Gastrocnemius medialis (tissue), 4 donors: ENCODE measurements at regions of chr13 and their contacts with region 1.

Region 1: GRCh38 chr13:39037880-39038568 is at the starts of genes NHLRC3 and PROSER1:
- DNase-seq: peak; percentile 78 to 88
- ATAC-seq: peak; percentile 93 to 94
- H3K4me3 ChIP-seq: peak within 1 kb of the TSS; percentile 79 to 94 (median 92)
- H3K27ac ChIP-seq: peak within 1 kb of the TSS; percentile 81 to 90 (median 88)
- H3K4me1 ChIP-seq: peaks cover 39 to 54% of the 10 kb centered on the region in 2 donors
- H3K27me3 ChIP-seq: no peaks in the 10 kb centered on the region
- CTCF ChIP-seq: peak in 3 of 5 experiments; percentile 7 to 34 (median 33)
- POLR2A ChIP-seq: peak; percentile 49 to 55
- total RNA-seq, gene NHLRC3: 7.8 to 10.5 (median 8.0) TPM
- total RNA-seq, gene PROSER1: 6.9 to 11.5 (median 9.1) TPM

Region 2: DNA sequence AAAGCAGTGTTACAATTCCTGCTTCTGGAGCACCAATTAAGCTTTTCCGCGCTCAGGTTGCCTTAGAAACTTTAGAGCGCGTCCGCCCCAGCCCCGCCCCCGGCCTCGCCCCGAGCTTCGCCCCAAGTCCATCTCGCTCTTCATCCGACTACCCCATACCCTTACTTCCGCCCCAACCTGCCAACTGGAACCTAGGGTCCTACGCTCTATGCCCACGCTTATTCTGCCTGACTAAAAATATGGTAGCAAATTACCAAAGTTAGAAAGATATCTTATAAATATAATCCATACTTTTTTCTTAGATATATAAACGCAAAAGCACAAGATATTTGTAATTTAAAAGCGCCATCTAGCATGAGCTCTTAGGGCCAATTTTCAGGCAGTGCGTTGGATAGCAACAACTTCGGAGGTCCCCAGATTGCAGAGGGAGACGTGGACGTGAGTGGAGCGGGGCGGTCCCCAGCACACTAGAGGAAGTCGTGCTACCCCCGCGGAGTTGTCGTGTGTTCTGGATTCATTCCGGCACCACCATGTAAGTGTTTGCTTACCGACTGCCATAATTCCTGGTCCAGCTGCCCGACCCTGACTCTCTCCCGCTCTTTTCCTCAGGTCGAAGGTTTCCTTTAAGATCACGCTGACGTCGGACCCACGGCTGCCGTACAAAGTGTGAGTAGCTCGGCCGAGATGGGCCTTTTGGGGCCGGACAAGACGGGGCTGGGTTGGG is 688.5 kb before region 1 on chr13 and contains the start of gene UFM1:
- in situ Hi-C with region 1: no loop called
- intact Hi-C with region 1: loop called (anchors 5 kb)
- DNase-seq: peak; percentile 81 to 85
- ATAC-seq: peak; percentile 97 to 98
- H3K4me3 ChIP-seq: peak within 1 kb of the TSS; percentile 60 to 98 (median 88)
- H3K27ac ChIP-seq: peak within 1 kb of the TSS; percentile 87 to 94 (median 90)
- H3K4me1 ChIP-seq: peaks cover 12 to 21% of the 10 kb centered on the region in 2 donors
- H3K27me3 ChIP-seq: no peaks in the 10 kb centered on the region
- CTCF ChIP-seq: no peak
- POLR2A ChIP-seq: peak; percentile 54 to 65
- total RNA-seq, gene UFM1: 22.6 to 31.0 (median 24.3) TPM

Region 3: DNA sequence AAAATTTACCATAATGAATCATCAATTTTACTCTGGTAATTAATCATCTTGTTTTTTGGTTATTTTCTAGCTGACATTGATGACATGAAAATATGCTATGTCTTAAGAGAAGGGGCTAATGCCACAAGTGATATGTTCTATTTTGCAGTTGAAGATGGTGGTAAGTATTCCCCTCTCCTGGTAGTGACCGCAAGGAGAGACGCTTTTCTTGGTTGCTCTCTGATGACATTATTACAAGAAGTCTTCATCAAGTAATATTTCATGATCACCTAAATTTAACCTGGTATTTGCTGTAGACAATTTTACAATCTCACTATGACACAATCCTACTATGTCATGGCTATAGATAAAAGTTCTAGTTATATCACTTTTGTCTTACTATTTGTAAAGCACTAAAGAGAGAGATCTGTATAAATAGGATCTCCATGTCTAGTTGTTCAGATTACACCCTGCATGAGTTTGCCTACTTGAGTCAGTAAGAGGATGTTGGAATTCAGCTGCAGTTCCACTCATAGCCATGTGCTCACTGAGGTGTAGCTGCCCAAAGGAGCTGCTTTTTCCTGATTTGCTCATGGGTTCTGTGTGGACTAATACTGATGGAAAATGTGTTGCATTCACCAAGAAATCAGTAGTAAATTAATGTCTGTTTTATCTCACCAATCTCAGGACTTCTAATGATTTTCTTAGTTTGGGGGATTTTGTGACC is 340.2 kb before region 1 on chr13:
- in situ Hi-C with region 1: no loop called
- intact Hi-C with region 1: loop called (anchors 10 kb)
- DNase-seq: peak in 1 of 2 donors; percentile 33
- ATAC-seq: peak; percentile 84 to 88
- H3K4me3 ChIP-seq: peak overlapping the region in 3 of 4 donors; percentile 16 to 20 (median 19)
- H3K27ac ChIP-seq: peak overlapping the region; percentile 74 to 79 (median 78)
- H3K4me1 ChIP-seq: peaks cover 65 to 77% of the 10 kb centered on the region in 2 donors
- H3K27me3 ChIP-seq: no peaks in the 10 kb centered on the region
- CTCF ChIP-seq: peak in 3 of 5 experiments; percentile 25 to 39 (median 29)
- POLR2A ChIP-seq: peak in 1 of 2 donors; percentile 0

Region 4: GRCh38 chr13:39602614-39603366 is 564.8 kb after region 1 on chr13 and contains the start of gene LHFPL6:
- in situ Hi-C with region 1: loop called in 1 of 4 experiments (anchors 25 kb)
- intact Hi-C with region 1: no loop called
- DNase-seq: peak; percentile 56 to 57
- ATAC-seq: peak; percentile 85 to 88
- H3K4me3 ChIP-seq: peak within 1 kb of the TSS; percentile 61 to 83 (median 73)
- H3K27ac ChIP-seq: peak within 1 kb of the TSS; percentile 54 to 82 (median 80)
- H3K4me1 ChIP-seq: peaks cover 6 to 10% of the 10 kb centered on the region in 2 donors
- H3K27me3 ChIP-seq: peaks cover 0 to 4% (median 0%) of the 10 kb centered on the region in 3 donors
- CTCF ChIP-seq: peak in 2 of 5 experiments; percentile 20 to 22
- POLR2A ChIP-seq: peak; percentile 42 to 74
- total RNA-seq, gene LHFPL6: 12.7 to 26.3 (median 16.0) TPM

Region 5: GRCh38 chr13:40408602-40409001 is 1370.6 kb after region 1 on chr13:
- in situ Hi-C with region 1: no loop called
- intact Hi-C with region 1: no loop called
- DNase-seq: no peak
- ATAC-seq: no peak
- H3K4me3 ChIP-seq: no peak overlapping the region
- H3K27ac ChIP-seq: peak overlapping the region in 2 of 4 donors; percentile 67 to 72
- H3K4me1 ChIP-seq: peaks cover 28 to 48% of the 10 kb centered on the region in 2 donors
- H3K27me3 ChIP-seq: no peaks in the 10 kb centered on the region
- CTCF ChIP-seq: no peak
- POLR2A ChIP-seq: no peak